ENCODE measurements at regions of chr2 and their contacts with region 1.

Region 1: GRCh38 chr2:218292048-218293014 is at the start of gene TMBIM1:
- DNase-seq: peak; percentile 87 to 95 (median 94)
- ATAC-seq: peak; percentile 86 to 93
- H3K4me3 ChIP-seq: peak within 1 kb of the TSS; percentile 48
- H3K27ac ChIP-seq: peak within 1 kb of the TSS; percentile 86
- H3K4me1 ChIP-seq: peaks cover 14% of the 10 kb centered on the region
- H3K27me3 ChIP-seq: no peaks in the 10 kb centered on the region
- total RNA-seq, gene TMBIM1: 95.2 to 158 (median 118) TPM

Region 2: DNA sequence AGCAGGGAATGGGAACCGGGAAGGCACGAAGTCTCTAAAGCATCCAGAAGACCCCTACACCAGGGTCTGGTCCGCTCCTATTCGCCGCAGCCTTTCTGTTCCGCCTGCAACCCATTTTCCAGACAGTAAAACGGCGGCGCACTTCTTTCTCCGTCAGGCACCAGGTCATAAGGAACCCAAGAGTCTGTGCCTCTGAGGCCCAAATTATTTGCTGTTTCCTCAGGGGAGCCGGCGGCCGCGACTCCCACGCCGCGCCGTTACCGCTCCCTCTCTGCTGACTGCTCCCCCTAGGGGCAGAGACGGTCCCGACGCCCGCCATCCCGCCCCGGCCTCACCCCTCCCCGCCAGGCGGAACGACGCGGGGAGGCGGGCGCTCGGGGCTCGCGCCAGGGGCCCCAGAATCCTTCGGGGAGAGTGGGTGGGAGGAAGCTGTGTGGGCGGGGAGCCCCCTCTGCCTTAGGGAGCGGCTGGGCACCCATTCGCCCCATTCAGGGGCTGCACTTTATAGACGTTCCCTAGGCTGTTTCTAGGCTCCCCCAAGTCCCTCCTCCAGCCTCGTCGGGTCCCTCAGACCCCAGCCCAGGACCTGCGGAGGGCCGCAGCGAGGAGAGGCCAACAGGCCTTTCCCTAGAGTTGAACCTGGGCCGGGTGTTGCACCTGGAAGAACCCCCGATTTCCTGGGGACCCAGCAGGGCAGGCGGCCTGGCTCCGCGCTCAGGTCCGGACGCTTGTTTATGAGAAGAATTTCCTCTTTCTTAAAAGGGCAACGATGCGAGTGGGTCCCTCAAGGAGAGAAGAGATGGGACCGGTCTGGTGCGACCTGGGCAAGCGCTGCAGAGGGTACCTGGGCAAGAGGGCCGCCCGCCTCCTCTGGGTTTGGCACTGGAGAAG is 103.7 kb after region 1 on chr2:
- intact Hi-C with region 1: loop called (anchors 5 to 10 kb)
- DNase-seq: peak; percentile 94 to 98 (median 97)
- ATAC-seq: peak; percentile 79 to 81
- H3K4me3 ChIP-seq: peak overlapping the region; percentile 92
- H3K27ac ChIP-seq: peak overlapping the region; percentile 99
- H3K4me1 ChIP-seq: no peaks in the 10 kb centered on the region
- H3K27me3 ChIP-seq: no peaks in the 10 kb centered on the region

Region 3: GRCh38 chr2:218523651-218524050 is 231.3 kb after region 1 on chr2:
- intact Hi-C with region 1: no loop called
- DNase-seq: no peak
- ATAC-seq: no peak
- H3K4me3 ChIP-seq: no peak overlapping the region
- H3K27ac ChIP-seq: no peak overlapping the region
- H3K4me1 ChIP-seq: no peaks in the 10 kb centered on the region
- H3K27me3 ChIP-seq: no peaks in the 10 kb centered on the region

Region 4: DNA sequence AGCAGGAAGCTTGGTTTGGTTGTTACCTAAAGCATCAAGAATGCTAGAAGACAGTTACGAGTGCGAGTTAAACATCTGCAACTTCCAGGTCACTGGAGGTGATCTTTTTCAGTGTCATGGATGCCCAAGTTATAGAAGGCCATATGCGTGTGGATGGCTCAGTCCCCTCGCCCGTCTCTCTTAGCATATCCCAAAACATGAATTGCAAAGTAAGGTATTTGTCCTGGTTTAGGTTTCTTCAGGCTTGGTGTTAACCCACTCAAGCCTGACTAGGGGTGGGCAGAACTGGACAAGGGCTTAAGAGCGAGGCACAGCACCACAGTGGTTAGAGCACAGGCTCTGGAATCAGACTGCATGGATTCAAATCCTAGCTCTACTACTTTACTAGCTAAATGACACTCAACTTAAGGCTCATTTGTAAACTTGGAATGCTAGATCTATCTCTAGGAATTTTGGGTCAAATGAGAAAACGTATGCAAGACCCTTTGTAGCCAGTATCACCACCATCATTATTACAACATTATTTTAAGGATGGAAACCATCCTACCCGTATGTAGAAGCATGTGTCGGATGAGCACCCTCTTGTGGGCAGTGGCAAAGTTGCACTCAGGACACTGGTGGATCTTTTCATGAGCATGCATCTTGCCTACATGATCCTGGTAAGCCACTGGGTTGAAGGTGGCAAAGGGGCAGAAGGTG is 355.9 kb after region 1 on chr2:
- intact Hi-C with region 1: loop called in 1 of 4 experiments (anchors 5 kb)
- DNase-seq: peak; percentile 33 to 79 (median 64)
- ATAC-seq: peak; percentile 61 to 71
- H3K4me3 ChIP-seq: no peak overlapping the region
- H3K27ac ChIP-seq: no peak overlapping the region
- H3K4me1 ChIP-seq: no peaks in the 10 kb centered on the region
- H3K27me3 ChIP-seq: no peaks in the 10 kb centered on the region

Region 5: GRCh38 chr2:219560037-219560892 is 1267.9 kb after region 1 on chr2:
- intact Hi-C with region 1: no loop called
- DNase-seq: peak in 2 of 3 donors; percentile 15 to 42
- ATAC-seq: peak; percentile 3 to 10
- H3K4me3 ChIP-seq: no peak overlapping the region
- H3K27ac ChIP-seq: no peak overlapping the region
- H3K4me1 ChIP-seq: no peaks in the 10 kb centered on the region
- H3K27me3 ChIP-seq: no peaks in the 10 kb centered on the region

Measured in right cardiac atrium (tissue), 5 donors.